Left cardiac atrium (tissue), 4 donors: ENCODE measurements at regions of chr11 and their contacts with region 1.

Region 1: DNA sequence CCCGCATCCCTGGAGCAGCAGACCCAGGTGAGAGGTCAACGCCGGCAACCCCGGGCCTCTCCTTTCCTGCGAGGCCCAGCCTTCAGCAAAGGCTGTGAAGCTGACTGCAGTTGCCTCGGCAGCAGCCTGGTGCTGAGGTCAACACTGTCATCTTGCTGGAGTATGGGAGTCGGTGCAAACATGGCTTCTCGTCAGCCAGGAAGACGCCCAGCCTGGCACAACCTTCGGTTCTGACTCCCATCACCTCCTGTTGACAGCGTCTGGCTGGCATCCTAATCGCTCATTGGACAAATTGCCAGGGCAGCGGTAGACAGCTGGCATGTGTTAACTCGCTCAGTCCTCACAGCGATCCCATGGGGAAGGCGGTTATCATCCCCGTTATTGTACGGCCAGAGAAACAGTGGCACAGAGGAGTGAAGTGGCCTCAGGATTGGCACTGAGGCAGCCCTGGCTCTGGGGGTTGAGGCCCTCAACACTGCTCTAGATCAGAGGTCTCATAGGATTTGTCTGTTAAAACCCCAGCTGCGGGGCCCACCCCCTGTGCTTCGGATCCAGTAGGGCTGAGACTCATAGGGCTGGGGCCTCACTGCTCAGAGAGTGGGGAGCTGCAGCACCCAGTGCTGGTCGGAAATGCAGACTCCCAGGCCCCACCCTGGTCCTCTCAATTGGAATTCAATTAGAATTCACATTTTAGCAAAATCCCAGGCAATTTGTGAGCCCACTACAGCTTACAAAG is 39.3 kb upstream of the TP53I11 start:
- DNase-seq: peak; percentile 84
- ATAC-seq: peak; percentile 89 to 91

Region 2: DNA sequence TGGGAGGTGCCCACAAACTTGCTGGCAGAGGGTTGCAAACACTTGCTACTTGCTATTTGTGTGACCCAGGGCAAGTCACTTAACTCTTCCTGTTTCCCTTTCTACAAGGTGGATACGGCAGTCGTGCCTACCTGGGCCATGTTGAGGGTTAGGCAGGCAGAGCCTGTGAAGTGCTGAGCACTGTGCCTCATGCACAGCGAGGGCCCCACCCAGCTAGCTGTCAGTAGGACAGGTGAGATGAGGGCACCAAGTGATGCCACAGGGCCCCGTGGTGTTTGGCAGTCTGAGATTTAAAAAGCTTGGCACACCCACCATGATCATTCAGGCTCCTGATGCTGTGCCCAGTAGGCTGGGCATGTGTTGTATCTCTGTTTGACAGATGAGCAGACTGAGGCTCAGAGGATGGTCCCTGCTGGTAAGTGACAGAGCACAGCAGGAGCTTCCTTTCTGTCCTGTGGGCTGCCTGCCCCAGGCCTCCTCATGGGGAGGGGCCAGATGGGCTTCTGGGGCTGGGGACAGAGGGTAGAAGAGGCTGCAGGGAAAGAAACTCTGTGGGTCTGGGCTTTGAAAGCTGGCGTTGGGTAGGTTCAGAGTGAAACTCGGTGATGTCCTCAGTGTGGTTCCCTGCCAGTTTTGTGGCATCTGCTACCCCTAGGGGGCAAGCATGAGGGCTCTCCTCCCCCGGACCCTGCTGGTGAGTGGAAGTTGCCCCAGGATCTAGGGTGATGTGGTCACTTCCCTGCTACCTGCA is 204.0 kb before region 1 on chr11:
- intact Hi-C with region 1: no loop called
- DNase-seq: no peak
- ATAC-seq: peak in 1 of 2 donors; percentile 30

Region 3: GRCh38 chr11:44950625-44951476 is 39.1 kb before region 1 on chr11 and contains the start of gene TP53I11:
- intact Hi-C with region 1: loop called in 1 of 2 experiments (anchors 5 kb)
- DNase-seq: peak; percentile 88
- ATAC-seq: peak; percentile 81 to 85
- total RNA-seq, gene TP53I11: 96.4 to 115 TPM